Heart left ventricle (tissue), 16 donors: ENCODE measurements at regions of chr9 and their contacts with region 1.

Region 1: GRCh38 chr9:8895861-8896224 is 1096.3 kb upstream of the DMAC1 start:
- DNase-seq: no peak
- ATAC-seq: peak; percentile 37 to 86 (median 72)
- H3K4me3 ChIP-seq: peak overlapping the region in 3 of 12 donors; percentile 4 to 38 (median 23)
- H3K27ac ChIP-seq: no peak overlapping the region
- H3K4me1 ChIP-seq: peaks cover 0 to 10% (median 0%) of the 10 kb centered on the region in 12 donors
- H3K27me3 ChIP-seq: no peaks in the 10 kb centered on the region
- CTCF ChIP-seq: peak; percentile 37 to 72 (median 60)
- POLR2A ChIP-seq: no peak

Region 2: GRCh38 chr9:7844242-7844641 is 1051.6 kb before region 1 on chr9:
- intact Hi-C with region 1: loop called in 1 of 10 experiments (anchors 10 kb)
- DNase-seq: no peak
- ATAC-seq: peak in 2 of 4 donors; percentile 41 to 54
- H3K4me3 ChIP-seq: no peak overlapping the region
- H3K27ac ChIP-seq: no peak overlapping the region
- H3K4me1 ChIP-seq: no peaks in the 10 kb centered on the region
- H3K27me3 ChIP-seq: no peaks in the 10 kb centered on the region
- CTCF ChIP-seq: peak in 7 of 12 donors; percentile 20 to 48 (median 33)
- POLR2A ChIP-seq: no peak

Region 3: GRCh38 chr9:8940650-8941049 is 44.8 kb after region 1 on chr9:
- intact Hi-C with region 1: no loop called
- DNase-seq: no peak
- ATAC-seq: no peak
- H3K4me3 ChIP-seq: no peak overlapping the region
- H3K27ac ChIP-seq: no peak overlapping the region
- H3K4me1 ChIP-seq: no peaks in the 10 kb centered on the region
- H3K27me3 ChIP-seq: no peaks in the 10 kb centered on the region
- CTCF ChIP-seq: no peak
- POLR2A ChIP-seq: no peak

Region 4: DNA sequence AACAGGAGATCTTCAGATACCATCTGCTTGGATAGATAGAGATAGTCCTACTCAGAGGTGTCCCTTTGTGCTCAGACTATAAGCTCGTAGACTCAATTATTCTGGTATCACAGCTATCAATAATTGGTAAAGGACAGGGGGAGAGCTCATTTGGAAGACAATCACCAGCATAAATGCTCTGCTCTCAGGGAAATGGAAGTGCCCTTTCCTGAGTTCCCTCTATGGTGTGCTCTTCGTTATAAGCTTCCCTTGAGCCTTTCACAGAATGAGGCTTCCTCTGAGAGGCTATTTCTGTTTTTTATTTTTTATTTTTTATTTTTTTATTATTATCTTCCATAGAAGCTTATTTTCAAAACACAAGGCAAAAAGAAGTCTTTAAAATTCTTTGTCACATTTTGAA is 59.5 kb after region 1 on chr9:
- intact Hi-C with region 1: no loop called
- DNase-seq: no peak
- ATAC-seq: no peak
- H3K4me3 ChIP-seq: no peak overlapping the region
- H3K27ac ChIP-seq: no peak overlapping the region
- H3K4me1 ChIP-seq: peaks cover 0 to 3% (median 0%) of the 10 kb centered on the region in 12 donors
- H3K27me3 ChIP-seq: no peaks in the 10 kb centered on the region
- CTCF ChIP-seq: no peak
- POLR2A ChIP-seq: no peak

Region 5: GRCh38 chr9:9117866-9118265 is 222.0 kb after region 1 on chr9:
- intact Hi-C with region 1: no loop called
- DNase-seq: no peak
- ATAC-seq: no peak
- H3K4me3 ChIP-seq: no peak overlapping the region
- H3K27ac ChIP-seq: no peak overlapping the region
- H3K4me1 ChIP-seq: no peaks in the 10 kb centered on the region
- H3K27me3 ChIP-seq: no peaks in the 10 kb centered on the region
- CTCF ChIP-seq: no peak
- POLR2A ChIP-seq: no peak